ENCODE measurements at regions of chr15 and their contacts with region 1.

Region 1: GRCh38 chr15:90233376-90234095 is at the start of gene CIB1:
- DNase-seq: peak; percentile 99
- ATAC-seq: peak; percentile 96
- total RNA-seq, gene CIB1: 73.2 TPM

Region 2: GRCh38 chr15:90101969-90102890 is 131.3 kb before region 1 on chr15 and contains the start of gene IDH2:
- intact Hi-C with region 1: loop called (anchors 5 kb)
- DNase-seq: peak; percentile 91
- ATAC-seq: peak; percentile 84
- total RNA-seq, gene IDH2: 1,173 TPM

Region 3: DNA sequence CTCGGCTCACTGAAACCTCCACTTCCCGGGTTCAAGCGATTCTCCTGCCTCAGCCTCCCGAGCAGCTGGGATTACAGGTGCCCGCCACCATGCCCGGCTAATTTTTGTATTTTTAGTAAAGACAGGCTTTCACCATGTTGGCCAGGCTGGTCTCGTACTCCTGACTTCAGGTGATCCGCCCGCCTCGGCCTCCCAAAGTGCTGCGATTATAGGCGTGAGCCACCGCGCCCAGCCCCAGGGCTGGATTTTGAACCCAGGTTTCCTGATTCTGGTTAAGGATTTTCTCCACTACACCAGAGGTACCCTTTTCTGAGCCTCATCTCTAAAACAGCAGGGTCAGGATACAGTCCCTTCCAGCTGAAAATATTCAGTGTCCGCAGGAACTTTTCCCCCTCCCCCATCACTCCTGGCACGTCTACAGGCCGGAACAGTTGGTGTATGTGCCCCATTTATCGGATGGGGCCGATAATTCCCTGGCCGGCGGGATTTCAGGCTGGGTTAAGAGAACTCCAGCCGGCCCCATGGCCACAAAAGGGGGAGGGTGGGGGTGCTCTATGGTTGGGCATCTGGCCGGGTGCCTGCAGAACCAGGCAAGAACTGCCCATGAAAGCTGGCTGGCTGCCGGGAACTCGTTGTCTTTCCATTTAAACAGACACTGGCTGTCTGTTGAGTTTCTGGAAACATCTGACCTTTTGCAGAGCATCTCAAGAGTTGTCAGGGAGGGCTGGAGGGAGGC is 59.2 kb before region 1 on chr15:
- intact Hi-C with region 1: loop called (anchors 5 kb)
- DNase-seq: peak; percentile 92
- ATAC-seq: peak; percentile 86

Region 4: DNA sequence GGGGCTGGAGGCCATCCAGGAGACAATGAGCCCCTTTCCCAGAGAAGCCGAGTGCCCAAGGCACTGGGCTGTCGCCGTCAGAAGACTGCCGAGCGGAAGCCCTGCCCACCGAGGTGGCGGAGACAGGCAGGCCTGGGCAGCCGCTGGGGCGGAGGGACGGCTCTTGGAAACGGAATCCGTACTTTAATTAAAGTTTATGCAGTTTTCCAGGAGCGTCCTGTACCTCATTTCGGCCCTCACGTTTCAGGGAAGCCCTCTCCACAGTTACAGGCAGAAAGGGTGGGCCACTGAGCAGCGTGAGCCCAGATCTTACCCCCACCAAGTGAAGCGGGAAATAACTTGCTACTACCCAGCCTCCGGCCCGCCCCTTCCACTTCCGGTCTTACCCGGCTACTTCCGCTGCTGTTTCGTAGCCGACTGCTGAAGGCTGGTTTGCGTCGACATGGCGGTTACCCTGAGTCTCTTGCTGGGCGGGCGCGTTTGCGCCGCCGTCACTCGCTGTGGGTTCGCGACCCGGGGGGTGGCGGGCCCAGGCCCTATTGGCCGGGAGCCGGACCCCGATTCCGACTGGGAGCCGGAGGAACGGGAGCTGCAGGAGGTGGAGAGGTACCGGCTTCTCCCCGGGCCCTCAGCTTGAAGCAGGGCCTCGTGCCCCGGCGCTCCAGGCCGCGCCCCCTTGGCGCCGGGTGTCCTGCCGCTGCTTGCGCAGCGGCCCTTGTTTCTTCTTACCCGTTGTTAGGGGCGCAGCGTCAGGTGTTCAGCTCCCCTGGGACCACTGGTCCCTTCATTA is 31.9 kb after region 1 on chr15 and contains the start of gene NGRN:
- intact Hi-C with region 1: loop called (anchors 2 kb)
- DNase-seq: peak; percentile 95
- ATAC-seq: peak; percentile 97
- total RNA-seq, gene NGRN: 122 TPM

Region 5: GRCh38 chr15:90620379-90621067 is 387.0 kb after region 1 on chr15:
- intact Hi-C with region 1: no loop called
- DNase-seq: no peak
- ATAC-seq: no peak

Measured in Right ventricle myocardium inferior (tissue), 1 donor.